ENCODE measurements at regions of chr1 and their contacts with region 1.

Region 1: GRCh38 chr1:45011837-45012638 is at the start of gene UROD:
- H3K4me3 Mint-ChIP-seq: peak within 1 kb of the TSS; percentile 88
- H3K27ac Mint-ChIP-seq: peak within 1 kb of the TSS; percentile 86
- H3K4me1 Mint-ChIP-seq: peaks cover 64% of the 10 kb centered on the region
- H3K27me3 Mint-ChIP-seq: no peaks in the 10 kb centered on the region

Region 2: DNA sequence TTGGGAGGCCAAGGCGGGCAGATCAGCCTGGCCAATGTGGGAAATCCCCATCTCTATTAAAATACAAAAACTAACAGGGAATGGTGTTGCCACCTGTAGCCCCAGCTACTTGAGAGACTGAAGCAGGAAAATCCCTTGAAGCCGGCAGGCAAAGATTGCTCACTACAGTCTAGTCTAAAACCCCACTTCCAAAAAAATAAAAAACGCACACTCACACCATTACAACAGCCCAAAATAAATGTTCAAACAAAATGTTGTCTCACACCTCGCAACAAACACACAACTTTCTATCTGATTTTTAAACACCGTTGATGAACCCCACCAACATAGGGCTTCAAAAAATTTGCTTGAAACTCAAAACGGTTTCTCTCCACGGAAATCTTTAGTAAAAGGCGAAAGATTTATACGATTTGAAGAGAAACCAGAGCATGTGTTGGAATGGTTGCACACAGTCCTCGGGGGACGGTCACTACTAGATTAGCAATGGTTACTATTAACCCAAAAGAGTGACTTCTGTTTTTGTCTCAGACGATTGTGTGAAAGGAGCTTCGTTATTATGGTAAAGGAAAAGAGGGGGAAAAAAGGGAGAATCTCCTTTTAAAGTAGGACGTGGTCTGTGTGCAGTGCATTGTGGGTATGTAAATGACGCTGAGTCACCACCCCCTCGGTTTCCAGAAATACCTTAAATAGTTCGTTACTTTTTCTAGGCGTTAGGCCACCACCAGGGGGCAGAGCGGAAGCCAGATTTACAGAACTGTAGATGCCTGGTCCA is 281.1 kb before region 1 on chr1 and contains the start of gene RNU5D-1:
- intact Hi-C with region 1: loop called (anchors 5 kb)
- H3K4me3 Mint-ChIP-seq: peak within 1 kb of the TSS; percentile 65
- H3K27ac Mint-ChIP-seq: peak within 1 kb of the TSS; percentile 96
- H3K4me1 Mint-ChIP-seq: peaks cover 40% of the 10 kb centered on the region
- H3K27me3 Mint-ChIP-seq: no peaks in the 10 kb centered on the region

Region 3: DNA sequence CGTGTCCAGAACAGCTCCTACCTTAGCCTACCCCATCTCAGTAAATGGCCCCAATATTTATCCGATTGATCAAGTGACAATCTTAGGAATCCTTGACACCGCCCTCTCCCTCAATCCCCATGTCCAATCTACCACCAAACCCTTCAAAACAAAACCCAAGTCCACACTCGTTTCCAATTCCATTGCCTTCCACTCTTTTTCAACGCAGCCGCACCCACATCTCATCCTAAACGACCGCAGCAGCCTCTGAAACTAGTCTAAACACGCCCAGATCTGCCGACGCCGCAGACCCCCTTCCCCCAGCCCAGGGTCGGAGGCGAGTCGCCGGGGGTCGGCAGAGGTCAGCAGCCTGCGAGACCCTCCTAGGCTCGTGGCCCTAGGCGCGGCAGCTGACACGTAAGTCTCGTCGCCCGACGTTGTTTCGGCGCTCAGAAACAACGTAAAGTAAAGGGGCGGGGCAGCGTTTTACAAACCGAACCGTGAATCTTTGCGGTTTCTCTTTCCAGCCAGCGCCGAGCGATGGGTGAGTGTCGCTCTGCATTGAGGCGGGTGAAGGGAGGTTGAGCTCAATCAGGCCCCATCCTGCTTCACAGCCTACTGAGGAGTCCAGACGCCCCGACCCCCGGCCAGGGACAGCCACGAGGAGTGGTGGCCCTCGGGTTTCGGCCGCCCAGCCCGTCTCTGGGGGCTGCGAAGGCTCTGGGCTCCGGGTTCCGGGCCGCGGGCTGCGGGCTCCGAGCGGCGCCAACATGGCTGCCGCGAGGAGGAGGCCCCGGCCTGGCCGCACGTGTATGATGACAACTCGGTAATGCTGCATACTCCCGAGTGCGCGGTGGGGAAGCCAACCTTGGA is 236.7 kb before region 1 on chr1 and contains the start of gene RPS8:
- intact Hi-C with region 1: loop called (anchors 5 kb)
- H3K4me3 Mint-ChIP-seq: peak within 1 kb of the TSS; percentile 89
- H3K27ac Mint-ChIP-seq: peak within 1 kb of the TSS; percentile 97
- H3K4me1 Mint-ChIP-seq: peaks cover 36% of the 10 kb centered on the region
- H3K27me3 Mint-ChIP-seq: no peaks in the 10 kb centered on the region

Region 4: GRCh38 chr1:44985747-44986359 is 26.2 kb before region 1 on chr1:
- intact Hi-C with region 1: no loop called
- H3K4me3 Mint-ChIP-seq: peak overlapping the region; percentile 95
- H3K27ac Mint-ChIP-seq: peak overlapping the region; percentile 93
- H3K4me1 Mint-ChIP-seq: peaks cover 6% of the 10 kb centered on the region
- H3K27me3 Mint-ChIP-seq: no peaks in the 10 kb centered on the region

Region 5: DNA sequence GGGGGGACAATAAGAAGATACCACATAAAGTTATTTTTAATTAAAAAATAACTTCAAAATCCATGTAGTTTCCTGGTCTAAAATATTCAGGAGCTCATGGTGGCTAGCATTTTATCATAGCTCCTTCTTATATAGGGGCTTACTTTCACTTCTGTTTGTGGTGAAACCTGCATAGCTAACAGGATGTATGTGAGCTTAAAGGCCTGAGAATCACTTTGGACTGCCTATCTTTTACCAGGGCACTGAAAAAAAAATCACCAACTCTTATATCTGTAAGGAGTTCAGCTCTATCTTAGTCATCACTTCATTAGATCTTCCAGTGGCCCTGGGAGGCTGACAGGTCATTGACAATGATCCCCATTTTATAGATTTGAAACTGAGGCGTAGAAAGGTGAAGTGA is 21.3 kb after region 1 on chr1:
- intact Hi-C with region 1: no loop called
- H3K4me3 Mint-ChIP-seq: no peak overlapping the region
- H3K27ac Mint-ChIP-seq: no peak overlapping the region
- H3K4me1 Mint-ChIP-seq: no peaks in the 10 kb centered on the region
- H3K27me3 Mint-ChIP-seq: no peaks in the 10 kb centered on the region

Region 6: DNA sequence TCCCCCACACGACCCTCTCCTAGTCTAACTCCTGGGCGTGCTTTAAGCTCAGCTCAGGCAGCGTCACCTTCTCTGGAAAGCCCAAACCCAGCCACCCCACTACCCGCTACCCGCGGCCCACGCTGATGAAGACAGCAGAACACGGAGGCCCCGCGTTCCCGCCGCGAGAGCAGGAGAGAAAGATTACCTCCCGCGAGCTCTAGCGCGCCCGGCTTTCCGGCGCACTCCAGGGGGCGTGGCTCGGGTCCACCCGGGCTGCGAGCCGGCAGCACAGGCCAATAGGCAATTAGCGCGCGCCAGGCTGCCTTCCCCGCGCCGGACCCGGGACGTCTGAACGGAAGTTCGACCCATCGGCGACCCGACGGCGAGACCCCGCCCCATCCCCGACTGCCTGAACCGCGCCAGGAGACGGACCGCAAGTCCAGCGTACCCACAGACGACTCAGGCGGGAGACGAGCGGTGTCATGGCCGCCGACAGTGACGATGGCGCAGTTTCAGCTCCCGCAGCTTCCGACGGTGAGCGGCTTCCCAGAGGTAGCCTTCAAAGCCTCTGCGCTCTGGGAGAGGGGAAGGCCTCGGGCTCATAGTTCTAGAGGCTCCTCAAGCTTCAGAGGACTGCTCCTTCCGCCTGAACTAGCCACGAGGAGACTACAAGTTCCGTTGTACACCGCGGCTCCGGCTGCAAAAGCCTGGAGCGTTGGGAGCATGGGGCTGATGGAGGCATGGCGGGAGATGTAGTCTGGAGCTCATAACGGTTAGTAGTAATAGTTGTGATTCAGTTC is 327.9 kb after region 1 on chr1 and contains the starts of genes MUTYH and TOE1:
- intact Hi-C with region 1: loop called (anchors 2 kb)
- H3K4me3 Mint-ChIP-seq: peak within 1 kb of the TSS; percentile 89
- H3K27ac Mint-ChIP-seq: peak within 1 kb of the TSS; percentile 95
- H3K4me1 Mint-ChIP-seq: peaks cover 43% of the 10 kb centered on the region
- H3K27me3 Mint-ChIP-seq: no peaks in the 10 kb centered on the region

Region 7: DNA sequence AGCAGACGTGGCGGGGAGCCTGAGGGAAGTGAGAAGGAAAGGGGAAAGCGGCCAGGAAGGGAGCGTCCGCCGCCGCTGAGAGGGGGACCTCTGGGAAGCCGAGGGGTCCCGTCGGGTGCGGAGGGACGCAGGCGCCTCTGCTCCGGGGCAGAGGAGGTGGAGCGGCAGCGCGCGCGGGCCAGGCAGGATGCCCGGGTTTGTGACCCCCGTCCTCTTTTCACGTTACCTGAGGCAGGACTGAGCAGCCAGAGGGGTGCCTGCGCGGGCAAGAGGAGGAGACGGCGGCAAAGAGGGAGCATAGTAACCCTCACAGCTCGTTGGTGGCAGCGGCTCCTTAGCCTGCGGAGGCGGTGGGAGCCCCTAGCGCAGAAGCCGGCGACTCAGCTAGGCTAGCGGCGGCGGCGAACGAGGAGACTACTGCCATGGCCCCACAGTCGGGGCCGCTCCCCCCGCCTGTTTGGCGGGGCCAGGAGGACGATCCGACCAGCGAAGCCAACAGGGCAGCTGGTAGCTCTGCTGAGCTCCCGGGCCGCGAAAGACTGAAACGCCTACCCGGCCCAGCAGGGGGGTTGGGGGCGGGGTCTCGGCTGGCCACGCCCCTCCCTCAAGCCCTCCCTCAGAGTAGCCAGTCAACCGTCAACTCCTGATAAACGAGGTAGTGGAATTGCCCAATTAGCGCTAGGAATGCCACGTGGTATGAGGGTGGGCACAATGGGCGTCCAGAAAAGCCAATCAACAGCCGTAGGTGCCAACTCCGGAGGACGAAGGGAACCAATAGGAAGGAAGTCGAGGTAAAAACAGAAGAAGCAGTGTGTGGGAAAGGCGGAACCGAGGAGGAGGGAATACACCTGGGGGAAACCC is 478.8 kb after region 1 on chr1 and contains the start of gene TESK2:
- intact Hi-C with region 1: loop called (anchors 5 kb)
- H3K4me3 Mint-ChIP-seq: no peak within 1 kb of the TSS
- H3K27ac Mint-ChIP-seq: no peak within 1 kb of the TSS
- H3K4me1 Mint-ChIP-seq: peaks cover 5% of the 10 kb centered on the region
- H3K27me3 Mint-ChIP-seq: peaks cover 5% of the 10 kb centered on the region